ENCODE measurements at regions of chr5 and their contacts with region 1.

Region 1: GRCh38 chr5:76544268-76544926 is 78.8 kb downstream of the F2RL2 start:
- DNase-seq: peak; percentile 51 to 69 (median 61)
- ATAC-seq: peak; percentile 81 to 87 (median 82)
- H3K4me3 ChIP-seq: no peak overlapping the region
- H3K27ac ChIP-seq: peak overlapping the region in 2 of 3 donors; percentile 24 to 48
- H3K4me1 ChIP-seq: peaks cover 3 to 70% (median 33%) of the 10 kb centered on the region in 4 donors
- H3K27me3 ChIP-seq: no peaks in the 10 kb centered on the region
- CTCF ChIP-seq: peak; percentile 71 to 80 (median 76)
- POLR2A ChIP-seq: no peak

Region 2: DNA sequence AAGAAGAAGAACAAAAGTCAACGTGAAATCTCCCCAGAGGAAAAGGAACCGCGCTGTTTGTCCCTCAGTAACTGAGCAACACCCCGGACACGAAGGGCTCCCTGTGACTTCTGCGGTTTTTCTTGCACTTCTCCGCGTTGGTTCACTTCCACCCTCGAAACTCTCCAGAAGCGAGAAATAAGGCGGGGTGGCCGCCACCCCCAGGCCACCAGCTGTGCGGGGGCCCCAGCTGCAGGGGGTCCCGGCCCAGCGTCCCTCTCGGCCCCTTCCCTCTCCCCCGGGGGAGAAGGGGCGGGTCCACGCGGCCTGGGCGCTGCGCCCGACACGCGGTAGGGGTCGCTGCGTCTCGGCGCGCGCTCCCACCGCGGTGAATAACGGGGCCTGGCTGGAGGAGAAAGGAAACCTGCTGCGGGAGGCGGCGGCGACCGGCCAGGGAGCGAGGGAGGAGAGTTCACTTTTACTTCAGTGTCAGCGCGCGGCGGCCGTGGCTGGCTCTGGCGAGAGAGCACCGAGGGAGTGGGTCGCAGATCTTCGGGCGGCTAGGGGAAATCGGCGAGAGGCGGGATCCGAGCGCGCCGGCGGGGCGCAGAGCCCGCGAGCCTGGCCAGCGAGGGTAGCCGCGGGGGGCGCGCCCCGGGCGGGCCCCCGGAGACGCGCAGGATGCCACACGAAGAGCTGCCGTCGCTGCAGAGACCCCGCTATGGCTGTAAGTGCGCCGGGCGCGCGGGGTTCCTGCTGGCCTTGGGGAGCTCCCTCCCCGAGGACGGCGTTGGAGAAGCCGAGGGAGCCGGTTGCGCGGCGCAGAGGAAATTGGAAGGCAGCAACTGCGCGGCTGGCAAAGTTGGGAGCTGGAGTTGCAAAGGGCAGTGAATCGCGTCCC is 141.3 kb before region 1 on chr5 and contains the start of gene IQGAP2:
- intact Hi-C with region 1: loop called (anchors 10 kb)
- DNase-seq: peak; percentile 89 to 91 (median 89)
- ATAC-seq: peak; percentile 70 to 82 (median 74)
- H3K4me3 ChIP-seq: peak within 1 kb of the TSS; percentile 83 to 91 (median 89)
- H3K27ac ChIP-seq: peak within 1 kb of the TSS; percentile 86 to 97 (median 96)
- H3K4me1 ChIP-seq: peaks cover 0 to 42% (median 11%) of the 10 kb centered on the region in 4 donors
- H3K27me3 ChIP-seq: no peaks in the 10 kb centered on the region
- CTCF ChIP-seq: peak; percentile 81 to 94 (median 84)
- POLR2A ChIP-seq: peak; percentile 73
- total RNA-seq, gene IQGAP2: 96.4 to 152 (median 123) TPM

Measured in right lobe of liver (tissue), 6 donors.